ENCODE measurements at regions of chr5 and their contacts with region 1.

Region 1: DNA sequence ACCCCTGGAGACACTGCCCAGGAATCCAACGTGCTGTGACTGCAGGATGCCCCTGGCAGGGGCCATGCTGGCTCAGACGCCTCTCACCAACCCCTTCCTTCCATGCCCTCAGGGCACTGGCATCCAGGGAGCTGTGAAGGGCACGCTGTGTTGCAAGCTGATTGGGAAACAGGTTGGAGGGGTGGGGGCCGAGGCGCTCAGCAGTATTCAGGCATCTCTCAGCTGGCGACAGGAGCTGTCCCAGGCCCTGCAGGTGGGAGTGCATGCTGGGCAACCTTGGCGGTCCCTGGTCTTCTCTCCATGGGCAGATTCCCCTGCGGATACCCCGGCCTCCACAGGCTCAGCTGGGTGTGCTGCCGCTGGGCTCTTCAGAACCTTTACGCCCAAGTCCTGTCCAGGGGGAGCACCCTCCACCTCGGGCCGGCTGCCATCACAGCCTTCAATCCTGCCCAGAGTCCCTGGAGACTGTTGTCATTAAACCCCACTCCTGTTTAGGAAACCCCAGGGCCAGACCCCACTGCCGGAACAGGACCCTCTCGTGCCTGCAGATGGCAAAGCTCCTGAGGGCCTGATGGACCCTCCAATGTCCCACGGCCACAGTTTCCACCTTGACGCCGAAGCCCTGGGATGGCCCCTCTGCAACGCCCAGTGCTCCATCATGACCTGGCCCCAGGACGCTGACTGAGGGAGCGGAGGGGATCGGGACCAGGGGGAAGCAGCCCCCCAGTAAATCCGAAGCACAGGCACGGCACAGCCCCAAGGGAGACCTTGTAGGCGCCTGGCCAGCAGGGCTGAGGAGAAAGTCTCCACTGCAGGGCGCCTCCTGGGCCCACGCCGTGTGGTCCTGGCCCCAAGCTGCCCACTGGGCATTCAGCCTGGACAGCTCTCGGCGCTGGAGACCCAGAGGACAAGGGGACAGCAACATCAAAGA is 9.3 kb downstream of the TPPP start:
- DNase-seq: no peak
- CTCF ChIP-seq: no peak

Region 2: GRCh38 chr5:321230-321725 is 362.5 kb before region 1 on chr5 and contains the start of gene AHRR:
- in situ Hi-C with region 1: no loop called
- DNase-seq: peak; percentile 92
- CTCF ChIP-seq: peak; percentile 65

Region 3: GRCh38 chr5:402615-403359 is 281.0 kb before region 1 on chr5:
- in situ Hi-C with region 1: no loop called
- DNase-seq: peak; percentile 80
- CTCF ChIP-seq: peak; percentile 3

Region 4: GRCh38 chr5:776792-777711 is 93.2 kb after region 1 on chr5:
- in situ Hi-C with region 1: loop called (anchors 10 kb)
- DNase-seq: peak; percentile 22
- CTCF ChIP-seq: no peak